Sciatic nerve (tissue), 2 donors: ENCODE measurements at regions of chr13 and their contacts with region 1.

Region 1: GRCh38 chr13:108700435-108701170 is 71.2 kb downstream of the MYO16 start:
- DNase-seq: no peak
- ATAC-seq: no peak

Region 2: DNA sequence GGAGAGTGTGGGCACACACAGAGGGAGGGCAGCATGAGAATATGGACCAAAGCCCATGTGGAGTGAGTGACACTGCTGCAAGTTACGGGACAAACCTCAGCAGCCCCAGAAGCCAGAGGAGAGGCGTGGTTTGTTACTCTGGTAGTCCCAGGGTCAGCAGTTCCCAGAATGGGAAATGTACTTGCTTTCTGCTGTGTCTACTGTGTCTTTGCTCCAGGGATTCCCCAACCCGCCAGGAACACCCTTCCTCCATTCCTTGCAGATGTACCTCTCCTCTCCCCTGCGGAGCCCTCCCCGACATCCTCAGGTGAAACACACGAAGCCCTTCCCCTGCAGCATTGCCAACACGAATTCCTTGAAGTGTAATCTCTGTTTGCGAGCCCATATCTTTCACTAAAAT is 24.0 kb before region 1 on chr13:
- intact Hi-C with region 1: loop called (anchors 1 kb)
- DNase-seq: no peak
- ATAC-seq: no peak

Region 3: GRCh38 chr13:108734680-108735079 is 34.1 kb after region 1 on chr13:
- intact Hi-C with region 1: no loop called
- DNase-seq: no peak
- ATAC-seq: no peak

Region 4: DNA sequence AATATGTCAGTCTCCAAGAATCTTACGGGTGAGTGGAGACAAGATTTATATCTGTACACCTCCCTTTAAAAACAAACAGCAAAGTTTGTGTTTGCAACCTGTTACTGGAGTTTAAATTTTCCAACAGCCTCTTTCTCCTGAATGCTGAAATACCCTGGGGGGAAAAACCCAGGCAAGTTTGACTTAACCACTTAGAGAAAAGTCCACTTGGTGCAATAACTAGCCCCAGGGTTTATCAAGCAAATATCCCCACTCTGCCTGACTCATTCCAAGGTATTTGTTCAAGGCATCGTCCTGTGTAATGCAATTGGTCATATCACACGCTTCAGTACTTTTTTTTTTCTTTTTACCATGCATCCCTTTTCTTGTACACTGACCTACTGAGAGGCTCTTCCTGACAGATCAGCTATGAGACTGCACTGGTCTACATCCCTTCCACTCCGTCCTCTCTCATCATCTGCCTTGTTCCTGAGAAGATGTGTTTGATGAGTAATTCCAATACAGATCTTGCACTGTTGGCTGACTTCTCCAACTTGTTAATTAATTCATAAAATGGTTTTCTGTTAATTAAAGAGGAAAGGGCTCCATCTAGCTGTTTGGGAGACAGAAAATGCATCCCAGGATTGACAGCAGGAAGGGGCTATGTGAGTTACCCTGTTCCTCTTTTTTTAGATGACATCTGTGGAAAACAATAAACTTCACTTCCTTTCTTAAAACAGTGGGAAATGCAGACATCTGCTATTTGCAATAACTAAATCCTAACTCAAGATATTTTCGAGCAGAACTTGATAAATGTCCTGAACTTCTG is 1298.3 kb after region 1 on chr13:
- intact Hi-C with region 1: no loop called
- DNase-seq: no peak
- ATAC-seq: peak; percentile 53